Right cardiac atrium (tissue), 5 donors: ENCODE measurements at regions of chr4 and their contacts with region 1.

Region 1: GRCh38 chr4:76251441-76252270 is at the start of gene FAM47E:
- DNase-seq: peak; percentile 80 to 88 (median 85)
- ATAC-seq: peak; percentile 97 to 98
- H3K4me3 ChIP-seq: peak within 1 kb of the TSS; percentile 57
- H3K27ac ChIP-seq: no peak within 1 kb of the TSS
- H3K4me1 ChIP-seq: no peaks in the 10 kb centered on the region
- H3K27me3 ChIP-seq: no peaks in the 10 kb centered on the region
- total RNA-seq, gene FAM47E: 2.6 to 3.3 (median 2.9) TPM

Region 2: DNA sequence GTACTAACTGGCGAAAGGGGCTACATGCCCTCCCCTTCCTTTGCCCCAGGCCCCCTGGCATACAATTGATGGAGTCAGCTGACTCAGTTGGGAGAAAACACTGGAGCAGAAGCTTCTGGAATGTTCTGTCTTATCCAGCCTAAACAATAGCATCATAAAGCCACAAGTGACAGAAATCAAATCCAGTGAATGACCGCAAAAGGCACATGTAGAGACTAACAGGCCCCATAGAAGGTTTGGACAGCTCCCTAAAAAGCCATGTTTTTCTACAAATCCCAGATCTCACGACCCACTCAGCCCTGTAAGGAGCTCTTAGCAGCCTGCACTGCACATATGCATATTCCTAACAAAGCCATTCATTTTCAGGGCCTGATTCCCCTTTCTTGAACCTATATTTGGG is 63.1 kb before region 1 on chr4:
- intact Hi-C with region 1: loop called in 2 of 4 experiments (anchors 5 kb)
- DNase-seq: no peak
- ATAC-seq: no peak
- H3K4me3 ChIP-seq: no peak overlapping the region
- H3K27ac ChIP-seq: no peak overlapping the region
- H3K4me1 ChIP-seq: peaks cover 7% of the 10 kb centered on the region
- H3K27me3 ChIP-seq: no peaks in the 10 kb centered on the region

Region 3: GRCh38 chr4:76476606-76477005 is 224.9 kb after region 1 on chr4:
- intact Hi-C with region 1: no loop called
- DNase-seq: no peak
- ATAC-seq: no peak
- H3K4me3 ChIP-seq: no peak overlapping the region
- H3K27ac ChIP-seq: no peak overlapping the region
- H3K4me1 ChIP-seq: no peaks in the 10 kb centered on the region
- H3K27me3 ChIP-seq: no peaks in the 10 kb centered on the region